CD4-positive, alpha-beta memory T cell (primary cell): ENCODE measurements at regions of chr9 and their contacts with region 1.

Region 1: DNA sequence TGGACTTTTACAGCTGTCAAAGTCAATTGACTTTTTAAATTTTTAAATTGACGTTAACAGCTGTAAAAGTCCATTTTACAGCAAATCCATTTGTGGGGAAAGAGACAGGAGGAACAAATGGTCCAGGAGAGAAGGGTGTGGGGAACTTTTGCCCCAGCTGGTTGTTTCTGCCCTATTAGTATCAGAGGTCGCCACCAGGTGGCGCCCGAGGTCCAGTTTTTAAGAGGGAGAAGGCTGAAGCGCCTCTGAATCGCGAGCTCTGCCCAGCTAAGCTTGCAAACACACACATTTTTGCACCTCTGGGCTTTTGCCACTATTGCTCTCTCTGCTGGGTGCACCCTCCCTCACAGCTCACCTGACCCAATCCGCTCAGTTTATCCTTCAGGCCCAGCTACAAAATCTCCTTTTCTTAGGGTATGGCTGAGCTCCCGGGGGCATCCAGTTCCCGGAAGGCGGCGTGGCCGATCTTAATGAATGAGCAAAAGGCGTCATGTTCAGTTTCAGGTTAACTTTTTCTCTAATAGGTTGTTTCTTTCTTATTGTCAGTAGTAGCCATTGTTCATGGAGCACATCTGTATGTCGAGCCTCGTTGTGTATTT is 6.3 kb upstream of the TTLL11 start:
- DNase-seq: peak; percentile 67 to 74 (median 71)
- H3K4me3 ChIP-seq: no peak overlapping the region
- H3K4me3 Mint-ChIP-seq: peak overlapping the region in 6 of 8 donors; percentile 4 to 77 (median 48)
- H3K27ac ChIP-seq: no peak overlapping the region
- H3K27ac Mint-ChIP-seq: no peak overlapping the region
- H3K4me1 ChIP-seq: peaks cover 8% of the 10 kb centered on the region
- H3K4me1 Mint-ChIP-seq: peaks cover 10 to 21% (median 13%) of the 10 kb centered on the region in 4 donors
- H3K27me3 ChIP-seq: no peaks in the 10 kb centered on the region
- H3K27me3 Mint-ChIP-seq: peaks cover 4 to 6% of the 10 kb centered on the region in 2 donors

Region 2: GRCh38 chr9:120136696-120137095 is 1962.7 kb before region 1 on chr9:
- CTCF ChIA-PET with region 1: no interaction called
- POLR2A ChIA-PET with region 1: no interaction called
- intact Hi-C with region 1: no loop called
- DNase-seq: no peak
- H3K4me3 ChIP-seq: no peak overlapping the region
- H3K4me3 Mint-ChIP-seq: no peak overlapping the region
- H3K27ac ChIP-seq: no peak overlapping the region
- H3K27ac Mint-ChIP-seq: no peak overlapping the region
- H3K4me1 ChIP-seq: no peaks in the 10 kb centered on the region
- H3K4me1 Mint-ChIP-seq: no peaks in the 10 kb centered on the region
- H3K27me3 ChIP-seq: no peaks in the 10 kb centered on the region
- H3K27me3 Mint-ChIP-seq: peaks cover 2% of the 10 kb centered on the region in 2 donors

Region 3: DNA sequence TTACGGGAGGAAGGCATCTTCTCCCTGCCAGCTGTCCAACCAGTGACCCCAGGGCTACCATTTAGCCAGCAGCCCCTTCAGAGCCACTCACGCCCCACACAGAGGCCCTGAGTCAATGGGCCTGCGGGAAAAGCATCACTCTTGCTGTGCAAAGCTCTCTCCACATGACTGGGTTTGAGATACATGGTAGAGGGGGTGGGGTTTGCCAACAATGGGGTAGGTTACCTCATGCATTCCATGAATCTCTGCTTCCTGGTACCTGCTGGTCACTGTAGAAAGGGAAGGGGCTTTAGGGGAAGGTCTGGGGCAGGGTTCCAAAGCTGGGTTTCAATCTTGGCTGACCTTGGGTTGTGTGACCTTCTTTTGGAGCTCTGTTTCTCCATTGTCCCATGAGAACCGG is 16.7 kb after region 1 on chr9:
- CTCF ChIA-PET with region 1: interaction called, 160 read pairs
- POLR2A ChIA-PET with region 1: no interaction called
- intact Hi-C with region 1: no loop called
- DNase-seq: no peak
- H3K4me3 ChIP-seq: no peak overlapping the region
- H3K4me3 Mint-ChIP-seq: no peak overlapping the region
- H3K27ac ChIP-seq: no peak overlapping the region
- H3K27ac Mint-ChIP-seq: no peak overlapping the region
- H3K4me1 ChIP-seq: no peaks in the 10 kb centered on the region
- H3K4me1 Mint-ChIP-seq: no peaks in the 10 kb centered on the region
- H3K27me3 ChIP-seq: no peaks in the 10 kb centered on the region
- H3K27me3 Mint-ChIP-seq: peaks cover 0 to 3% of the 10 kb centered on the region in 2 donors

Region 4: GRCh38 chr9:122144836-122145591 is 45.6 kb after region 1 on chr9:
- CTCF ChIA-PET with region 1: interaction called, 16 read pairs
- POLR2A ChIA-PET with region 1: no interaction called
- intact Hi-C with region 1: no loop called
- DNase-seq: no peak
- H3K4me3 ChIP-seq: no peak overlapping the region
- H3K4me3 Mint-ChIP-seq: no peak overlapping the region
- H3K27ac ChIP-seq: no peak overlapping the region
- H3K27ac Mint-ChIP-seq: no peak overlapping the region
- H3K4me1 ChIP-seq: no peaks in the 10 kb centered on the region
- H3K4me1 Mint-ChIP-seq: peaks cover 0 to 5% (median 3%) of the 10 kb centered on the region in 4 donors
- H3K27me3 ChIP-seq: no peaks in the 10 kb centered on the region
- H3K27me3 Mint-ChIP-seq: no peaks in the 10 kb centered on the region

Region 5: GRCh38 chr9:122159026-122159924 is 59.9 kb after region 1 on chr9 and contains the starts of genes MORN5 and NDUFA8:
- CTCF ChIA-PET with region 1: interaction called, 16 read pairs
- POLR2A ChIA-PET with region 1: no interaction called
- intact Hi-C with region 1: no loop called
- DNase-seq: peak; percentile 94 to 96 (median 95)
- H3K4me3 ChIP-seq: peak within 1 kb of the TSS; percentile 89 to 93
- H3K4me3 Mint-ChIP-seq: peak within 1 kb of the TSS; percentile 95 to 99 (median 98)
- H3K27ac ChIP-seq: peak within 1 kb of the TSS; percentile 82
- H3K27ac Mint-ChIP-seq: peak within 1 kb of the TSS; percentile 82 to 99 (median 97)
- H3K4me1 ChIP-seq: peaks cover 25% of the 10 kb centered on the region
- H3K4me1 Mint-ChIP-seq: peaks cover 29 to 48% (median 35%) of the 10 kb centered on the region in 4 donors
- H3K27me3 ChIP-seq: no peaks in the 10 kb centered on the region
- H3K27me3 Mint-ChIP-seq: peaks cover 8 to 10% of the 10 kb centered on the region in 2 donors
- total RNA-seq, gene MORN5: not detected
- total RNA-seq, gene NDUFA8: 17.6 to 20.4 TPM

Region 6: DNA sequence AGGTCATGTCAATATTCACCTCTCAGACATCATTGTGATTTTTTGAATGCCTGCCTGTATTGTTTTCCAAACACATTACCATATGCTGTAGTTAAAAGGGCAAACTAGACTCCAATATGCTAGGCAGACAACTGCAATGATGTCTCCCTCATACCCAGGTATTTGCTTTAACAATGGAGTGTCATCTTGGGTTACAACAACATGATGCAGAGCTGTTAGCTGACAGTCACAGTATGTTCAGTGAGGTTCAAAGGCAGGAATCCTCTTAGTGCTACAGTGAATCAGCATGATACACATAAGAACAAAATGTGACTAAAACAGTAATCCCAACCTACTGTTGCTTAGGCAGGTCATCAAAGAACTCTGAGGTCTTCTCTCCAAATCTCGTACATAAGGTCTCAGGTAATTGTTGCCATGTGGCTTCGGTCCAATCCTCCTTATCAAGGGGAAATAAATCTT is 354.3 kb after region 1 on chr9:
- CTCF ChIA-PET with region 1: no interaction called
- POLR2A ChIA-PET with region 1: no interaction called
- intact Hi-C with region 1: loop called (anchors 1 kb)
- DNase-seq: no peak
- H3K4me3 ChIP-seq: no peak overlapping the region
- H3K4me3 Mint-ChIP-seq: no peak overlapping the region
- H3K27ac ChIP-seq: no peak overlapping the region
- H3K27ac Mint-ChIP-seq: no peak overlapping the region
- H3K4me1 ChIP-seq: no peaks in the 10 kb centered on the region
- H3K4me1 Mint-ChIP-seq: no peaks in the 10 kb centered on the region
- H3K27me3 ChIP-seq: no peaks in the 10 kb centered on the region
- H3K27me3 Mint-ChIP-seq: peaks cover 11 to 14% of the 10 kb centered on the region in 2 donors